ENCODE measurements at regions of chr11 and their contacts with region 1.

Region 1: DNA sequence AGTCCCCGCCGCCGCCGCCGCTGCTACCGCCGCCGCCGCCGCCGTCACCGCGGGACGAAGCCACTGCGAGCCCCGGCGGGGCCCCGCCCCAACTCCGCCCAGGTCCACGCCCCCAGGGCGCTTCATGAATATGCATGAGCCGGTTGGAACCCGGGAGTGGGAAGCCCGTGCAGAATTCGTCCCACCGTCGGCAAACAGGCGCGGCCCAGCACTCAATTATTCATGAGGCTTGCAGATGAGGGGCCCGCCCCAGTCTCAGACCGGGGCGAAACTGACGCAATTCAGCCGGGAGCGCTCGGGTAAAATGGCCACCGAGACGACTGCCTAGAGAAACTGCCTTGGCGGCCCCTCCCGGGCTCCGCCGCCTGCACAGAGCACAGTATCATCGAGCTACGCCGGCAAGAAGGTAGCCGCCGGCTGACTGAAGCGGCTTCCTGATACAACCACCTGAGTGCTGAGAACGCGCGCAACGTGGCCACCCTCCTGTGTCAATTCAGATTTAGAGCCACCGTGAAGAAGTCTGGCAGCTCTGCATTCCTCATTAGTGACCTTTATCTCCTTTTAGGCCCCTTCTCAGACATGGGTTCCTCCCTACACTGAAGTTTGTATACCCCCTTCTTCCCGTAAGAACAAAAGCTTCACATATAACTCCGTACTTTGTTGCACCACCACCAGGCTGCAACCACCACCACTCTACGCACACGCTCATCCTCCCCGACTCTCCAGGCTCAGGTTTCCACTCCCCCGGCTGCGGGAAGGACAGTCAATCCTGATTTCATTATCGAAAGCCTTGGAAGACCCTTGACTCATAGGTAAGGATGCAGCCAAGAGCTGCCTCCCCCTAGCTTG is at the start of gene TNKS1BP1:
- DNase-seq: peak; percentile 86
- H3K4me3 Mint-ChIP-seq: peak within 1 kb of the TSS; percentile 84
- H3K27ac Mint-ChIP-seq: peak within 1 kb of the TSS; percentile 92
- H3K4me1 Mint-ChIP-seq: peaks cover 51% of the 10 kb centered on the region
- H3K27me3 Mint-ChIP-seq: no peaks in the 10 kb centered on the region
- total RNA-seq, gene TNKS1BP1: 15.6 and 16.5 TPM in 2 replicates

Region 2: DNA sequence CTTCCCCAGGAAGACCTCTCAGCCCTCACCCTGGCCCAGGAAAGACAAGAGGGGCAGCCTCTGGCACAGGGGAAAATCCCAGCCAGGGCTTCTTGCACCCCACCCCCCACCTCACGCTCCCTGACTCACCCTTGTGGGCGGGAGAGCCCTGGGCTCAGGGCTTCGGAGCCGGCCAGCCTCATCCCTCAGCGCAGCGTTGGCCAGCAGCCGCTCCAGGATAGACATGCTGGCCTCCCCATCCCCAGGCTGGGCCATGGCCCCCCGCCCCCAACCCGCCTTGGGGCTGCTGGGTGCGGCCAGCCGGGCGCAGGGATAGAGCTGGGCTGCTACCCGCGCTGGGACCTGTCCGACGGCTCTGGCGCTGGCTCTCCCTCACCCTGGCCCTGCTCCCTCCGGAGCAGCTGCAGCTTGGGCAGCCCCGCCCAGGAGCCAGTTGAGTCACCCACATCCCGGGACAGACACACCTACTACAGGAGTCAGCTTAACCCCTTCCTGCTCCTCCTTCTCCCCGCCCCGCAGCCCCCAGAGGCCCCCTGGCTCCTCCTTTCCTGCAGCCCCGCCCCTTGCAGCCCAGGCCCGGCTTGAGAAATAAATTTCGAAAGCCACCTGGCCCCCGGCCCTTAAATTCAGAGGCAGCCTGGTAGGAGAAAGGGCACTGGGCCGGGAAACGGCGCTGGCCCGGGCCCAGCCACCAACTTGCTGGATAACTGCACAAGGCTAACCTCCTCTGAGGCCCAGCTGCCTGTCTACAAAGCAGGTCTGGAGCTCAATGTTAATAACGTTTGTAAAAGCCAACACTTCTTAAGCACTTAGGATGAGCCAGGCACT is 13.8 kb before region 1 on chr11:
- intact Hi-C with region 1: loop called (anchors 1 kb)
- DNase-seq: peak; percentile 70
- H3K4me3 Mint-ChIP-seq: peak overlapping the region; percentile 28
- H3K27ac Mint-ChIP-seq: no peak overlapping the region
- H3K4me1 Mint-ChIP-seq: peaks cover 3% of the 10 kb centered on the region
- H3K27me3 Mint-ChIP-seq: no peaks in the 10 kb centered on the region

Region 3: GRCh38 chr11:58047818-58048217 is 722.7 kb after region 1 on chr11:
- intact Hi-C with region 1: no loop called
- DNase-seq: no peak
- H3K4me3 Mint-ChIP-seq: no peak overlapping the region
- H3K27ac Mint-ChIP-seq: no peak overlapping the region
- H3K4me1 Mint-ChIP-seq: no peaks in the 10 kb centered on the region
- H3K27me3 Mint-ChIP-seq: no peaks in the 10 kb centered on the region

Measured in activated T-helper 2 cell treated with anti-CD3 and anti-CD28 coated beads, Interferon-gamma antibody, Interleukin-2, Interleukin-4, amounts not matched to agents 10 μg/mL and 5 μg/mL and 100 μg/mL, durations not matched to agents 14 hours and 24 hours and 36 hours (primary cell).